SK-N-SH (cell line): ENCODE measurements at regions of chr7 and their contacts with region 1.

Region 1: DNA sequence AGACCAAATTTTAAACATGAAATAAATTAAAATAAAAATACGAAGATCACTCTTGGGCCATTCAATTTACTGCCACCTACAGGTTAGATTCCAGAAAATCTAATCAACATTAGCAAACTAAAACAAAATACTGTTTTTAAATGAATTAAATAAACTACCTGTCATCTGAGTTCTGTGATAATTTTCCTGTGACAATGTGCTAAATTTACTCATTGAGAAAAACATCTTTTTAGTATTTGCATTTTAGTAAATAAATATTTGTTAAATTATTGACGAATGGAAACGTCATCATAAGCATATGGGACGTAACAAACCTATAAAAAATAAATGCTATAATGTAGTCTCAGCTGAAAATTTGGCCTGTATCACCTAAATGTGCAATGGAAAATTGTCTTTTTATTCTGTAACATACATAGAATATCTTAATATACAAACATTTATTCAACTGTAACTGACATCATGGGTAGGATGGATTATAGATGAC is 72.1 kb downstream of the ITGB8 start:
- DNase-seq: no peak
- H3K4me3 ChIP-seq: no peak overlapping the region
- H3K27ac ChIP-seq: no peak overlapping the region
- H3K4me1 ChIP-seq: peaks cover 0 to 7% of the 10 kb centered on the region in 2 experiments; a peak in 2 of 4 replicates
- H3K27me3 ChIP-seq: no peaks in the 10 kb centered on the region
- CTCF ChIP-seq: peak; percentile 79
- EP300 ChIP-seq: no peak
- RAD21 ChIP-seq: peak; percentile 35

Region 2: GRCh38 chr7:20417260-20417659 is 14.5 kb after region 1 on chr7:
- CTCF ChIA-PET with region 1: interaction called, 14 read pairs
- POLR2A ChIA-PET with region 1: no interaction called
- DNase-seq: no peak
- H3K4me3 ChIP-seq: no peak overlapping the region
- H3K27ac ChIP-seq: no peak overlapping the region
- H3K4me1 ChIP-seq: no peaks in the 10 kb centered on the region
- H3K27me3 ChIP-seq: no peaks in the 10 kb centered on the region
- CTCF ChIP-seq: no peak
- EP300 ChIP-seq: no peak
- RAD21 ChIP-seq: no peak

Region 3: DNA sequence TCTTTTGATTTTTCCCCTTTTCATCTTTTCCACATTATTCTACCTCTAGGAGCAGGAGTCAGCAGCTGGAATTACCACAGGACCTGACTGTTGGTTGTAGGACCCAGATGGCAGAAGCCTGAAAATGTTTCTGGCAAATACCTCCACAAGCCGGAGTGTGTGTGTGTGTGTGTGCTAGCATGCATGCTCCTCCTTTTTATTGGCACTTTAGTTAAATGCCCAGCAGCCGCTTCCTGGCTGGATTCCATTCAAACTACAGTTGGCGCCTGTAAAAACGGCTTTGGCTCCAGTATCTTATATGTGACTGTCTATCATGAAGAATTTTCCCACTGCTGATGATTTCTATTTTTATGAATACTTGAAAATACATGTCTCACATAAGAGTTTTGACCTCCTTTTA is 705.4 kb after region 1 on chr7:
- CTCF ChIA-PET with region 1: no interaction called
- POLR2A ChIA-PET with region 1: no interaction called
- DNase-seq: no peak
- H3K4me3 ChIP-seq: no peak overlapping the region
- H3K27ac ChIP-seq: no peak overlapping the region
- H3K4me1 ChIP-seq: no peaks in the 10 kb centered on the region
- H3K27me3 ChIP-seq: no peaks in the 10 kb centered on the region
- CTCF ChIP-seq: no peak
- EP300 ChIP-seq: no peak
- RAD21 ChIP-seq: no peak